Ascending aorta (tissue), 2 donors: ENCODE measurements at regions of chr4 and their contacts with region 1.

Region 1: GRCh38 chr4:145097821-145098674 is at the starts of genes ABCE1 and ANAPC10:
- DNase-seq: peak; percentile 85 to 98
- H3K4me3 ChIP-seq: peak within 1 kb of the TSS; percentile 74 to 75
- H3K27ac ChIP-seq: peak within 1 kb of the TSS; percentile 87 to 90
- H3K4me1 ChIP-seq: peaks cover 4 to 18% of the 10 kb centered on the region in 2 donors
- H3K27me3 ChIP-seq: no peaks in the 10 kb centered on the region
- CTCF ChIP-seq: peak in 1 of 3 experiments; percentile 27
- total RNA-seq, gene ABCE1: 43.7 TPM
- total RNA-seq, gene ANAPC10: 2.6 TPM

Region 2: GRCh38 chr4:143513306-143514168 is 1584.5 kb before region 1 on chr4 and contains the start of gene SMARCA5:
- intact Hi-C with region 1: loop called (anchors 1 kb)
- DNase-seq: peak; percentile 94 to 99
- H3K4me3 ChIP-seq: peak within 1 kb of the TSS; percentile 65 to 84
- H3K27ac ChIP-seq: peak within 1 kb of the TSS; percentile 97 to 98
- H3K4me1 ChIP-seq: peaks cover 0 to 14% of the 10 kb centered on the region in 2 donors
- H3K27me3 ChIP-seq: no peaks in the 10 kb centered on the region
- CTCF ChIP-seq: no peak
- total RNA-seq, gene SMARCA5: 15.5 TPM

Region 3: GRCh38 chr4:145125396-145125795 is 27.3 kb after region 1 on chr4:
- intact Hi-C with region 1: no loop called
- DNase-seq: no peak
- H3K4me3 ChIP-seq: no peak overlapping the region
- H3K27ac ChIP-seq: no peak overlapping the region
- H3K4me1 ChIP-seq: no peaks in the 10 kb centered on the region
- H3K27me3 ChIP-seq: no peaks in the 10 kb centered on the region
- CTCF ChIP-seq: no peak

Region 4: GRCh38 chr4:145153181-145153903 is 55.3 kb after region 1 on chr4:
- intact Hi-C with region 1: no loop called
- DNase-seq: no peak
- H3K4me3 ChIP-seq: no peak overlapping the region
- H3K27ac ChIP-seq: no peak overlapping the region
- H3K4me1 ChIP-seq: no peaks in the 10 kb centered on the region
- H3K27me3 ChIP-seq: no peaks in the 10 kb centered on the region
- CTCF ChIP-seq: no peak

Region 5: GRCh38 chr4:145180298-145181090 is 82.4 kb after region 1 on chr4 and contains the start of gene OTUD4:
- intact Hi-C with region 1: loop called (anchors 2 kb)
- DNase-seq: peak; percentile 84 to 98
- H3K4me3 ChIP-seq: peak within 1 kb of the TSS; percentile 91 to 93
- H3K27ac ChIP-seq: peak within 1 kb of the TSS; percentile 94 to 99
- H3K4me1 ChIP-seq: peaks cover 0 to 14% of the 10 kb centered on the region in 2 donors
- H3K27me3 ChIP-seq: no peaks in the 10 kb centered on the region
- CTCF ChIP-seq: peak in 2 of 3 experiments; percentile 13 to 23
- total RNA-seq, gene OTUD4: 81.4 TPM

Region 6: GRCh38 chr4:145481164-145481941 is 383.3 kb after region 1 on chr4 and contains the start of gene SMAD1:
- intact Hi-C with region 1: loop called (anchors 5 kb)
- DNase-seq: peak in 1 of 2 donors; percentile 89
- H3K4me3 ChIP-seq: peak within 1 kb of the TSS; percentile 96 to 99
- H3K27ac ChIP-seq: peak within 1 kb of the TSS; percentile 97
- H3K4me1 ChIP-seq: no peaks in the 10 kb centered on the region
- H3K27me3 ChIP-seq: no peaks in the 10 kb centered on the region
- CTCF ChIP-seq: no peak
- total RNA-seq, gene SMAD1: 20.1 TPM

Region 7: GRCh38 chr4:146175541-146176453 is 1077.7 kb after region 1 on chr4 and contains the start of gene LSM6:
- intact Hi-C with region 1: loop called (anchors 5 kb)
- DNase-seq: peak; percentile 39 to 91
- H3K4me3 ChIP-seq: peak within 1 kb of the TSS; percentile 95 to 99
- H3K27ac ChIP-seq: peak within 1 kb of the TSS; percentile 95
- H3K4me1 ChIP-seq: peaks cover 2 to 17% of the 10 kb centered on the region in 2 donors
- H3K27me3 ChIP-seq: no peaks in the 10 kb centered on the region
- CTCF ChIP-seq: peak in 1 of 3 experiments; percentile 21
- total RNA-seq, gene LSM6: 10.7 TPM